GM12878 (cell line): ENCODE measurements at regions of chr5 and their contacts with region 1.

Region 1: GRCh38 chr5:139745800-139746690 is 49.6 kb upstream of the PSD2 start:
- DNase-seq: no peak
- ATAC-seq: peak; percentile 61
- H3K4me3 ChIP-seq: no peak overlapping the region
- H3K27ac ChIP-seq: peak overlapping the region; percentile 33; the same call in 1 of the 2 replicates
- H3K4me1 ChIP-seq: peaks cover 48% of the 10 kb centered on the region
- H3K27me3 ChIP-seq: peaks cover 0 to 14% of the 10 kb centered on the region in 2 experiments; a peak in 3 of 4 replicates
- CTCF ChIP-seq: no peak
- EP300 ChIP-seq: no peak
- POLR2A ChIP-seq: no peak
- RAD21 ChIP-seq: no peak

Region 2: DNA sequence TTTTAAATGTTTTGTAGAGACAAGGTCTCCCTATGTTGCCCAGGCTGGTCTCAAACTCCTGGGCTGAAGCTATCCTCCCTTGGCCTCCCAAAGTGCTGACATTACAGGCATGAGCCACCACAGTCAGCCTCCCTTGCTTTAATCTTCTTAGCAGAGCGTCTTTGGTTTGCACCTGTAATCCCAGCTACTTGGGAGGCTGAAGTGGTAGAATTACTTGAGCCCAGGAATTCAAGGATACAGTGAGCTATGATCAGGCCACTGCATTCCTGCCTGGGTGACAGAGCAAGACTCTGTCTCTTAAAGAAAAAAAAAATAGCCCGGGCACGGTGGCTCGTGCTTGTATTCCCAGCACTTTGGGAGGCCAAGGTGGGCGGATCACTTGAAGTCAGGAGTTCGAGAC is 157.1 kb before region 1 on chr5:
- CTCF ChIA-PET with region 1: no interaction called
- POLR2A ChIA-PET with region 1: no interaction called
- RAD21 ChIA-PET with region 1: no interaction called
- SMC1A ChIA-PET with region 1: no interaction called
- in situ Hi-C with region 1: no loop called
- intact Hi-C with region 1: no loop called
- DNase-seq: no peak
- ATAC-seq: no peak
- H3K4me3 ChIP-seq: no peak overlapping the region
- H3K27ac ChIP-seq: no peak overlapping the region
- H3K4me1 ChIP-seq: peaks cover 25% of the 10 kb centered on the region
- H3K27me3 ChIP-seq: no peaks in the 10 kb centered on the region
- CTCF ChIP-seq: no peak
- EP300 ChIP-seq: no peak
- POLR2A ChIP-seq: no peak
- RAD21 ChIP-seq: no peak

Region 3: GRCh38 chr5:139660923-139661814 is 84.9 kb before region 1 on chr5:
- CTCF ChIA-PET with region 1: no interaction called
- POLR2A ChIA-PET with region 1: interaction called, 15 read pairs
- RAD21 ChIA-PET with region 1: interaction called, 18 read pairs
- SMC1A ChIA-PET with region 1: no interaction called
- in situ Hi-C with region 1: no loop called
- intact Hi-C with region 1: no loop called
- DNase-seq: no peak
- ATAC-seq: peak; percentile 46
- H3K4me3 ChIP-seq: peak overlapping the region; percentile 14; the same call in 1 of the 2 replicates
- H3K27ac ChIP-seq: peak overlapping the region; percentile 67
- H3K4me1 ChIP-seq: peaks cover 97% of the 10 kb centered on the region
- H3K27me3 ChIP-seq: no peaks in the 10 kb centered on the region
- CTCF ChIP-seq: no peak
- EP300 ChIP-seq: no peak
- POLR2A ChIP-seq: no peak
- RAD21 ChIP-seq: no peak

Region 4: GRCh38 chr5:139696894-139697658 is 49.0 kb before region 1 on chr5:
- CTCF ChIA-PET with region 1: interaction called, 6 read pairs
- POLR2A ChIA-PET with region 1: interaction called, 5 read pairs
- RAD21 ChIA-PET with region 1: interaction called, 23 read pairs
- SMC1A ChIA-PET with region 1: interaction called, 35 read pairs
- in situ Hi-C with region 1: no loop called
- intact Hi-C with region 1: no loop called
- DNase-seq: no peak
- ATAC-seq: peak; percentile 46
- H3K4me3 ChIP-seq: 0 out of 2 replicates have a peak overlapping the region, but pooled peaks have one; percentile 17
- H3K27ac ChIP-seq: no peak overlapping the region
- H3K4me1 ChIP-seq: peaks cover 12% of the 10 kb centered on the region
- H3K27me3 ChIP-seq: peaks cover 0 to 3% of the 10 kb centered on the region in 2 experiments; a peak in 2 of 4 replicates
- CTCF ChIP-seq: no peak
- EP300 ChIP-seq: no peak
- POLR2A ChIP-seq: no peak
- RAD21 ChIP-seq: no peak

Region 5: DNA sequence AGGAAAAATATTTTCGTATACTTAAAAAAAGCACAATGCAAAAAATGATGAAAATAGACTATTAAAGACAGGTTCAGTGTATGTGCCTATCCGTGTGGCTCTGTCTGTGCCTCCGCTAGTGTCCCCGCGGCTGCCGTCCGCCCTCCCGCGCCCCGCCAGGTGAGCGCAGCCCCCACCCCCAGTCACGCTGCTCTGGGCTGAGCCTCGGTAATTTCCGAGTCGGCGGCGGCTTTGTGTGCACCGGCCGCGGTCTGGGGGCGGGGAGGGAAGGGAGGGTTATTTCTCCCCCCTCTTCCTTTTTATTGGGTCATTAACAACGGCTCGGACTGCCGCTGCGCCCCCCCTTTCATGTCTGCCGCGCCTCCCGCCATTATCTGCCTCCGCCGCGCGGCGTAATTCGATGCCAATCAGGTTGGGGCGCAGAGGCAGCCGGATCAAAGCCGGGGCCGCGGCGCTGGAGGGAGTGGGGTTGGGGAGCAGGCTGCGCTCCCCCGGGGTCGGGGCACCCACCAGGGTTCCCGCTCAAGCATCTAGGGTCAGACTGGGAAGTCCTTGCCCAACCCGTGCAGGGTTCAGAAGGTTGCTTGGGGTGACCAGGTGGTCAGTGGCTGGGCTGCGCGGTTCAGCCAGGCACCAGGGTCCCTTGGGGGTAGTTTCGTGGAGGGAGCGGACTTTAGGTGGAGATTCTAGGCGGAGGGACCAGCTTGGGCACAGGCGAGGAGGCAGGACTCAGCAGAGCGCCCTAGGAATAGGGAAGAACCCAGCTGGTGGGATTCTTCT is 10.0 kb after region 1 on chr5:
- CTCF ChIA-PET with region 1: interaction called, 4 read pairs
- POLR2A ChIA-PET with region 1: interaction called, 7 read pairs
- RAD21 ChIA-PET with region 1: interaction called, 4 read pairs
- SMC1A ChIA-PET with region 1: interaction called, 12 read pairs
- in situ Hi-C with region 1: no loop called
- intact Hi-C with region 1: no loop called
- DNase-seq: no peak
- ATAC-seq: peak; percentile 80
- H3K4me3 ChIP-seq: peak overlapping the region; percentile 49; the same call in 1 of the 2 replicates
- H3K27ac ChIP-seq: no peak overlapping the region
- H3K4me1 ChIP-seq: no peaks in the 10 kb centered on the region; the same call in 1 of the 2 replicates
- H3K27me3 ChIP-seq: peaks cover 4 to 13% of the 10 kb centered on the region in 2 experiments; a peak in 3 of 4 replicates
- CTCF ChIP-seq: no peak
- EP300 ChIP-seq: no peak
- POLR2A ChIP-seq: no peak
- RAD21 ChIP-seq: no peak

Region 6: GRCh38 chr5:139946440-139946839 is 200.4 kb after region 1 on chr5:
- CTCF ChIA-PET with region 1: no interaction called
- POLR2A ChIA-PET with region 1: no interaction called
- RAD21 ChIA-PET with region 1: no interaction called
- SMC1A ChIA-PET with region 1: no interaction called
- in situ Hi-C with region 1: no loop called
- intact Hi-C with region 1: no loop called
- DNase-seq: no peak
- ATAC-seq: peak; percentile 67
- H3K4me3 ChIP-seq: no peak overlapping the region
- H3K27ac ChIP-seq: no peak overlapping the region
- H3K4me1 ChIP-seq: peaks cover 14% of the 10 kb centered on the region
- H3K27me3 ChIP-seq: no peaks in the 10 kb centered on the region
- CTCF ChIP-seq: no peak
- EP300 ChIP-seq: no peak
- POLR2A ChIP-seq: no peak
- RAD21 ChIP-seq: no peak